ENCODE measurements at regions of chr19 and their contacts with region 1.

Region 1: GRCh38 chr19:1275260-1275975 is at the start of gene FAM174C:
- DNase-seq: peak; percentile 97
- H3K4me3 Mint-ChIP-seq: peak within 1 kb of the TSS; percentile 86
- H3K27ac Mint-ChIP-seq: peak within 1 kb of the TSS; percentile 95
- H3K4me1 Mint-ChIP-seq: peaks cover 56% of the 10 kb centered on the region
- H3K27me3 Mint-ChIP-seq: no peaks in the 10 kb centered on the region
- total RNA-seq, gene FAM174C: 74.8 to 76.1 TPM

Region 2: DNA sequence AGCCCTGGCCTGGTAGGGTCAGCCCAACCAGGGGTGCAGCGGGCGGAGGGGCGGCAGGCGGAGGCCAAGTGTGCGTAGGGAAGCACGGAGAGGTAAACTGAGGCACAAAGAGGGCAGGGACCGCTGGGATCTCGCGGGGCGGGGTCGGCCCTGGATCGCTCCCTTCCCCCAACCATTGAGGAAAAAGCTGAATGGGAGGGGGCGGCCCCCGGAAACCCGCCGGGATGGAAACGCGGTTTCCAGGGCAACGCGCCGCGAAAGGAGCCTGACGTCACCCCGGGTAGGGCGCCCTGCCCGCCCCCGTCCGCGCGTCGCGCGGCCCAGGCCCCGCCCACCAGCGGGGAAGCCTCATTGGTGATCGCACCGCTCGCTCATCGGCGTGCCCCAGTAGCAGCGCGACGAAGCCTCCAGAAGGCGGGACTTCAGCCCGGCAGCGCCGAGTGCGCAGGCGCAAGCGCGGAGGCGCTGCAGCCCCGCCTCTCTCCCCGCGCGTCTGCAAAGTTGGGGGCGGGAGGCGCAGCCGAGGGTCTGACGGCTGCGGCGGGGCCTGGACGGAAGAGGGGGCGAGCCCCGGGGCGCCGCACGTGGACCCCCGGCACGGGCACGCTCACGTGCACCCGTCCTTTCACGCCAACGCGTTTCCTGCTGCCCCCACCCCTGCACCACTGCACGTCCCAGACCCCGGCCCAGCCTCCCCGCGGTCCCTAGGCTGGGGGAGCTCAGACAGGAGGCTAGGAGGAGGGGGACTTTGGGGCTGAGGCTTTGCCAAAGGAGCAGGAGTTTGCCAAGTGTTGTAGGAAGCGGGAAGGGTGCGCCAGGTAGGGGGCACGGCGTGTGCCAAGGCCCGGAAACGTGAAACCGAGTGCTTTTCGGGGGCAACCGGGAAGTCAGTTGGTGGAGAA is 14.5 kb before region 1 on chr19:
- CTCF ChIA-PET with region 1: interaction called, 3 read pairs
- POLR2A ChIA-PET with region 1: interaction called, 5 read pairs
- intact Hi-C with region 1: loop called (anchors 1 kb)
- DNase-seq: peak; percentile 98
- H3K4me3 Mint-ChIP-seq: peak overlapping the region; percentile 94
- H3K27ac Mint-ChIP-seq: peak overlapping the region; percentile 96
- H3K4me1 Mint-ChIP-seq: peaks cover 52% of the 10 kb centered on the region
- H3K27me3 Mint-ChIP-seq: no peaks in the 10 kb centered on the region

Region 3: DNA sequence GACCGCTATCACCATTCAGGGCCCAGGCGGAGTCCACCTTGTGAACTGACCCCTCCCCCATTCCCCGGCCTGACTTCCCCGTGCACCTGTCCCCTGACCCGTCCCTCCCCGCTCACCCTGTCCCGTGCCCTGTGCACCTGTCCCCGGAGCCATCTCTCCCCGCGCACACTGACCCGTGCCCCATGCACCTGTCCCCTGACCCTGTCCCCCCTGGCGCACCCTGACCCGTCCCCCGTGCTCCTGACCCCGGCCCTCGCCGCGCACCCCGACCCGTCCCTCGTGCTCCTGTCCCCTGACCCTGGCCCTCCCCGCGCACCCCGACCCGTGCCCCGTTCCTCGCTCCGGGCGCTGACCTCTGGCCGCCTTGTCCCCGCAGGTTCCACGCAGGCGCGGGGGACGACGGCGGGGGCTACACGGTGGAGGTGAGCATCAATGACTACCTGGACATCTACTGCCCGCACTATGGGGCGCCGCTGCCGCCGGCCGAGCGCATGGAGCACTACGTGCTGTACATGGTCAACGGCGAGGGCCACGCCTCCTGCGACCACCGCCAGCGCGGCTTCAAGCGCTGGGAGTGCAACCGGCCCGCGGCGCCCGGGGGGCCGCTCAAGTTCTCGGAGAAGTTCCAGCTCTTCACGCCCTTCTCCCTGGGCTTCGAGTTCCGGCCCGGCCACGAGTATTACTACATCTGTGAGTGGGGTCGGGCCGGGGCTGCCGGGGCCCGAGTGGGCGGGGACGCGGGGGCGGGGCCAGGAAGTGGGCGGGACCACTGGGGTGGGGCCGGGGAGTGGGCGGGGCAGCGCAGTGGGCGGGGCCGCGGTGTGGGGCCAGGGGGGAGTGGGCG is 20.0 kb after region 1 on chr19:
- CTCF ChIA-PET with region 1: no interaction called
- POLR2A ChIA-PET with region 1: no interaction called
- intact Hi-C with region 1: no loop called
- DNase-seq: peak; percentile 55
- H3K4me3 Mint-ChIP-seq: no peak overlapping the region
- H3K27ac Mint-ChIP-seq: no peak overlapping the region
- H3K4me1 Mint-ChIP-seq: no peaks in the 10 kb centered on the region
- H3K27me3 Mint-ChIP-seq: peaks cover 23% of the 10 kb centered on the region

Region 4: DNA sequence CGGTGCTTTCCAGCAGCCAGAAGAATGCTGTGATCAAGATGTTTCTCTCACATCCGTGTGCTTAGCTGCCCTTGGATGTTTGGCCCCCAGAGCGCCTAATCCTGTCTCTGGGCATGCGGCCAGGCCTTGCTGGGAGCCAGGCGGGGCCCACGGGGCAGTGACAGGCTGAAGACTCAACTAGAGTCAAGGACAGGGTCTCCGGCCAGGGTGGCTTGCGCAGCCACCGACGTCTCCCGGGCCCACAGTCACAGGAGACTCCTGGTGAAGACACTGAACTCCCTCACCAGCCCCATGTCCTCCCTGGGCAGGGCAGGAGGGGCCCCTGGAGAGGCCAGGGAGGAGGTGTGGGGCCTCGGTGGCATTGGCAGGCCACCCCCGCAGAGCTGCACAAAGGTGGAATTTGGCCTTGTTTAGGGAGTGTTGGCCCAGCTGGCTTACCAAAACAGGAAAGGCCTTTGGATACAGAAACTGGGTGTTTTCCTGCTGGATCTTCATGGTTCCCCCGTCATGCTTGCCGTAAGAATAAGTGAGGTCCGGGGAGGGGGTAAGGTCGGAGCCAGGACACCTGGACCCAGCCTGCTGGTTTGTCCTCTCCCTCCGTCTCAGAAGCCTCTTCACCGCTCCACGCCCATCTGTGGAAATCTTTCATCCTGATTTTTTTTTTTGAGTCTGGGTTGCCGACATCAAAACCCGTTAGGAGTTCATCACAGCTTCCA is 98.3 kb after region 1 on chr19:
- CTCF ChIA-PET with region 1: interaction called, 22 read pairs
- POLR2A ChIA-PET with region 1: no interaction called
- intact Hi-C with region 1: no loop called
- DNase-seq: no peak
- H3K4me3 Mint-ChIP-seq: no peak overlapping the region
- H3K27ac Mint-ChIP-seq: no peak overlapping the region
- H3K4me1 Mint-ChIP-seq: no peaks in the 10 kb centered on the region
- H3K27me3 Mint-ChIP-seq: no peaks in the 10 kb centered on the region

Region 5: GRCh38 chr19:1383311-1384084 is 108.1 kb after region 1 on chr19 and contains the start of gene NDUFS7:
- CTCF ChIA-PET with region 1: interaction called, 9 read pairs
- POLR2A ChIA-PET with region 1: interaction called, 3 read pairs
- intact Hi-C with region 1: loop called (anchors 5 kb)
- DNase-seq: peak; percentile 95
- H3K4me3 Mint-ChIP-seq: peak within 1 kb of the TSS; percentile 80
- H3K27ac Mint-ChIP-seq: peak within 1 kb of the TSS; percentile 97
- H3K4me1 Mint-ChIP-seq: peaks cover 23% of the 10 kb centered on the region
- H3K27me3 Mint-ChIP-seq: peaks cover 4% of the 10 kb centered on the region
- total RNA-seq, gene NDUFS7: 117 to 119 TPM

Region 6: GRCh38 chr19:1513499-1514294 is 238.3 kb after region 1 on chr19:
- CTCF ChIA-PET with region 1: no interaction called
- POLR2A ChIA-PET with region 1: no interaction called
- intact Hi-C with region 1: loop called (anchors 5 kb)
- DNase-seq: peak; percentile 81
- H3K4me3 Mint-ChIP-seq: peak overlapping the region; percentile 39
- H3K27ac Mint-ChIP-seq: no peak overlapping the region
- H3K4me1 Mint-ChIP-seq: peaks cover 4% of the 10 kb centered on the region
- H3K27me3 Mint-ChIP-seq: peaks cover 3% of the 10 kb centered on the region

Measured in activated CD4-positive, alpha-beta memory T cell treated with anti-CD3 and anti-CD28 coated beads for 36 hours (primary cell).